PC-9 (cell line): ENCODE measurements at regions of chr7 and their contacts with region 1.

Region 1: GRCh38 chr7:35694781-35695472 is at the start of gene HERPUD2:
- DNase-seq: peak; percentile 92 to 99
- H3K4me3 ChIP-seq: peak within 1 kb of the TSS; percentile 96
- H3K27ac ChIP-seq: peak within 1 kb of the TSS; percentile 77
- H3K4me1 ChIP-seq: peaks cover 61% of the 10 kb centered on the region
- H3K27me3 ChIP-seq: no peaks in the 10 kb centered on the region
- CTCF ChIP-seq: no peak
- total RNA-seq, gene HERPUD2: 33.8 and 53.4 TPM in 2 replicates

Region 2: DNA sequence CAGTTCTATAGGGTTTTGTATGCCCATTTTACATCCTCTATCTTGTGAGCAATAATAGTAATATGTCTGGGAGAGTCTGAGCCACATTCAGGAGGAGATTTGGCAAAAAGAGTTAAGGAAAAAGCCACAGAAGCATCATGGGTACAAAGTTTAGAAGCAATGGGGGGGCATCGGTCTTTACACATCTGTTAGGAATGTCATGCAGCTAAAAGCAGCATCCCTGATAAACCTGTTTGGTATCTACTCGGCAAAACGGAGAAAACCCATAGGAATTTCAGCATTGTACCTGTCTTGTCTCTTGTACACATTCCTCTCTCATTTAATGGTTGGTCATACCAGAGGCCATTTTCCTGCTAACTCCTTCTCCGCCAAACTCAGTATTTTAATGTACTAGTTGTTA is 12.5 kb after region 1 on chr7:
- CTCF ChIA-PET with region 1: interaction called, 8 read pairs
- POLR2A ChIA-PET with region 1: no interaction called
- intact Hi-C with region 1: loop called (anchors 1 kb)
- DNase-seq: peak in 1 of 2 experiments; percentile 85
- H3K4me3 ChIP-seq: no peak overlapping the region
- H3K27ac ChIP-seq: no peak overlapping the region
- H3K4me1 ChIP-seq: peaks cover 16% of the 10 kb centered on the region
- H3K27me3 ChIP-seq: no peaks in the 10 kb centered on the region
- CTCF ChIP-seq: no peak

Region 3: GRCh38 chr7:35723011-35723410 is 28.1 kb after region 1 on chr7:
- CTCF ChIA-PET with region 1: no interaction called
- POLR2A ChIA-PET with region 1: no interaction called
- intact Hi-C with region 1: no loop called
- DNase-seq: no peak
- H3K4me3 ChIP-seq: no peak overlapping the region
- H3K27ac ChIP-seq: no peak overlapping the region
- H3K4me1 ChIP-seq: no peaks in the 10 kb centered on the region
- H3K27me3 ChIP-seq: no peaks in the 10 kb centered on the region
- CTCF ChIP-seq: no peak

Region 4: DNA sequence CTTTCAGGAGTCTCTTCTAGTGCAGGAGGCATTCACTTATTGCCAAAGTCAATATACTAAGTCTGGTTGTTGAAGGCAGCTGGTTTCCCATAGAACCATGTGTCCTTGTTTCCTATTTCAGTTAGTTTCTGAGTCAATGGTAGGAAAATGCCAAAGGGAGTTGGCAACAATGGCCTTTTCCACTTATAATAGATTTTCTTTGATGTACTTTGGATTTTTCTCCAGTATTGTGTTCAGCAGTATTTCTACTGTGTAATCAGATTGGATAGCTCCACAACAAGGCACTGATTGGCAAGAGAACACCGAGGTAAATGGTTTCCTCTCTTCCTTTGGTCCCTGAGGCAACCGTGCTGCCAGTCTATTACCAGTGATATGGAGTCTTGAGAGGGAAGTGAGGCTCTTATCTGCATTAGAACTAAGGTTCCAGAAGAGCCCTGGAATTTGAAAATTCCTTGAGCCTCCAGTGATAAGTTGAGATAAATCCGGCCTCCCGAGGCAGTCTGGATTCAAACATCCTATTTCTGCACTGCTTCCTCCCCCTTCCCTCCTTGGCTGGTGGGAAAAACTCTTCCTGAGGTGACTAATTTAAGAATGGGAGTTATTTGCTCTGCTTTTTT is 98.1 kb after region 1 on chr7:
- CTCF ChIA-PET with region 1: no interaction called
- POLR2A ChIA-PET with region 1: no interaction called
- intact Hi-C with region 1: no loop called
- DNase-seq: no peak
- H3K4me3 ChIP-seq: no peak overlapping the region
- H3K27ac ChIP-seq: no peak overlapping the region
- H3K4me1 ChIP-seq: no peaks in the 10 kb centered on the region
- H3K27me3 ChIP-seq: no peaks in the 10 kb centered on the region
- CTCF ChIP-seq: no peak

Region 5: DNA sequence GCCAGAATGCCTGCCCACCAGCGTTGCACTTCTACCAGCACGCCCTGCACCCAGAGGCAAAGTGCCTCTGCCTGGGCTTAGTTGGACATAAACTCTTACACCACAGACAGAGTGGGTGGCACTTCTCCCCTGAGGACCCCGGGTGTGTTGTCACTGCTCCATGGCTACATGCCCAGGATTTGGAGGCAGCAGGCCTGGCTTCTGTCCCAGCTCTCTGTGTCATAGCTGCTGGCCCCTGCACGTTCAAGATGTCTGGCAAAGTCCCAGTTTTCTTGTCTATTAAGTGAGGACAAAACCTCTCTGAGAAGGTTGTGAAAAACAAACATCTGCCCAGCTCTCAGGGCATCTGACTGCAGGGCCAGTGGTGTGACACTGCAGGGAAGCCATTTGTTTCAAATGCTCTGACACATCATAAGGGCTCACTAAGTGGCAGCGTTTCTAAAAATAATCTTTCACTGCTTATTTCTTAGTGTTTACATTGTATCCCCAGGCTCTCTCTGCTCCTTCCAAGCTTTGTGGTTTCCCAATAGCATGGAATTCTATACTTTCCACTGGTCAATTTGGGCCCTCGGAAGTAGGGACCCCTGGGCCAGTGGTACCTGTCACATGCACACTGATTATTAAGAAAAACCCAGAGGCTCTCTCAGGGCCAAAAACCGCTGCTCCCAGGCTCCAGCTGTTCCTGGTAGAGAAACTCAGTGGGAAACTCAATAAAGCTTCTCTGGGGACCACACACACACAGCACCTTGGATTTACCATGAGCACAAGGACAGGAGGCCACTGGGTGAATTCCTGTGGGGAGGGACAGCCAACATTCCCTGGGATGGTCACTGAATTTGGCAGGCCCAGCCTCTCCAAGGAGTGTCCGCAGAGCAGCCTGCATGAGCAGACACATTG is 608.5 kb after region 1 on chr7:
- CTCF ChIA-PET with region 1: no interaction called
- POLR2A ChIA-PET with region 1: no interaction called
- intact Hi-C with region 1: loop called (anchors 5 kb)
- DNase-seq: peak; percentile 94 to 100
- H3K4me3 ChIP-seq: no peak overlapping the region
- H3K27ac ChIP-seq: peak overlapping the region; percentile 60
- H3K4me1 ChIP-seq: peaks cover 29% of the 10 kb centered on the region
- H3K27me3 ChIP-seq: no peaks in the 10 kb centered on the region
- CTCF ChIP-seq: no peak